ENCODE measurements at regions of chr20 and their contacts with region 1.

Region 1: GRCh38 chr20:5991623-5992441 is 41.4 kb downstream of the MCM8 start:
- DNase-seq: peak; percentile 72
- ATAC-seq: peak; percentile 87
- H3K4me3 ChIP-seq: no peak overlapping the region
- H3K27ac ChIP-seq: peak overlapping the region; percentile 71
- H3K4me1 ChIP-seq: peaks cover 32% of the 10 kb centered on the region
- H3K27me3 ChIP-seq: no peaks in the 10 kb centered on the region
- CTCF ChIP-seq: no peak

Region 2: DNA sequence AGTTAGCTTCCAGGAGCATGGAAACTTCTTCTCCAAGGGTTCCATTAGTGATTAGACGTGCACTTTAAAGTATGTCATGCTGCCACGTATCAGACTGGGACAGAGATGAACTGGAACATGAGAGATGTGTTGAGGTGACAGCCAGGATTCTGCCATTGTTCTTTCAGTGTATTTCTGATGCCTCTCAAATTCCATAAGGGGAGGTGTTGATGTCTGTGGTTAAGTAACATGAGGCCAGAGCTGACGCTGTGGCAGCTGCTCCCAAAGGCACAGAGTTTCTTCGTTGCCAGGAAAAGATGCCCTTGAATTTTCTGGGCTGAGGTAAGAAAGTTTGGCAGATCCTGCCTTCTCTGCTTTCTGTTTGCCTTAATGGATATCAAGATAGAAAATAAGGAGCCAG is 105.0 kb before region 1 on chr20:
- CTCF ChIA-PET with region 1: no interaction called
- POLR2A ChIA-PET with region 1: no interaction called
- intact Hi-C with region 1: no loop called
- DNase-seq: no peak
- ATAC-seq: no peak
- H3K4me3 ChIP-seq: no peak overlapping the region
- H3K27ac ChIP-seq: no peak overlapping the region
- H3K4me1 ChIP-seq: no peaks in the 10 kb centered on the region
- H3K27me3 ChIP-seq: peaks cover 45% of the 10 kb centered on the region; the same call in 1 of the 2 replicates
- CTCF ChIP-seq: no peak

Region 3: DNA sequence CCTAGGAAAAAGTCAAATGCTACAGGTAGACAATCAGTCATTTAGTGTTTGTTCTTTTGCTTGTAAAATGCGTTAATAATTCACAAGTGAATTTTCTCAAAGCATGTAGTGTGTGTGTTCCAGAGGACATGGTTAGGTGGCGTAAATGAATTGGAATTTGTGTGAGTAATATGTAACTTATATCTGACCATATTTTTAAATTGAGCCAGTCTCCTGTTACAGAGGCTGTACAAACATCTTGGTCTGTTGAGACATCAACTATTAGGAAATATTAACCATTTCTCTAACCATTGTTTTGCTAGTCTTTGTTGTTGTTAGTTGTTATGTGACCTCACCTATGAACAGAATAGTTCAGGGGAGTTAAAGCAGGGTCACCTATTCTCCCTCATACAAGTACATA is 18.7 kb before region 1 on chr20:
- CTCF ChIA-PET with region 1: no interaction called
- POLR2A ChIA-PET with region 1: no interaction called
- intact Hi-C with region 1: loop called (anchors 2 kb)
- DNase-seq: peak; percentile 97
- ATAC-seq: peak; percentile 94
- H3K4me3 ChIP-seq: peak overlapping the region; percentile 34; the same call in 1 of the 2 replicates
- H3K27ac ChIP-seq: peak overlapping the region; percentile 86
- H3K4me1 ChIP-seq: peaks cover 52% of the 10 kb centered on the region
- H3K27me3 ChIP-seq: no peaks in the 10 kb centered on the region
- CTCF ChIP-seq: no peak

Region 4: DNA sequence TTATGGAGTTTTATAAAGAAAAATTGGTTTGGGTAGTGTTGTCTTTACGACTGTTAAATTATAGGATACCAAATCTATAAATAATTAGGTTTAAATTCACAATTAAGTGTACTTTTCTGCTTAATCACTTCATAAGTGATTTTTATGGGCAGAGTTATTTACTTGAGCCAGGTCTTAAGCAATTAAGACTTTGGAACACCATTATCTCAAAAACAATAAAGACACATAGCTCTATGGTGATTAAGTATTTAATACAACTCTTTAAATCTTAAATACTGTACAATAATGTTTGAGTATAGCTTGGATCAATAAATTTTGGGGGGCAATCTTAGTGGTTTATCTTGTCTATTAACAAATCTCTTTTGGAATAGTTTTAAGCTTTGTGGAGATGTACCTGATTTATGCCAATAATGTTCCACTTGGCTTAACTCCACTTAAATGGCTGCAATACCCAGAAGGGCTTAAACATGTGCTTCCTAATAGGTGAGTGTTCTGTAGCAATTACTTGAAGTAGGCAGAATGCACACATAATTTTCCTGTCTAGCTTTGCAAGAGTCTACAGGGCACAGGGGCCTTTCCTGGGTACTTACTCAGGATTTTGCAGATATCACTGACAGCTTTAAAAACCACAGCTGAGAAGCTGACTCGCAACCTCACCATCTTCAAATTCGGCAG is 123.5 kb after region 1 on chr20:
- CTCF ChIA-PET with region 1: no interaction called
- POLR2A ChIA-PET with region 1: no interaction called
- intact Hi-C with region 1: no loop called
- DNase-seq: no peak
- ATAC-seq: no peak
- H3K4me3 ChIP-seq: no peak overlapping the region
- H3K27ac ChIP-seq: no peak overlapping the region
- H3K4me1 ChIP-seq: peaks cover 3% of the 10 kb centered on the region; the same call in 1 of the 2 replicates
- H3K27me3 ChIP-seq: no peaks in the 10 kb centered on the region
- CTCF ChIP-seq: no peak

Region 5: DNA sequence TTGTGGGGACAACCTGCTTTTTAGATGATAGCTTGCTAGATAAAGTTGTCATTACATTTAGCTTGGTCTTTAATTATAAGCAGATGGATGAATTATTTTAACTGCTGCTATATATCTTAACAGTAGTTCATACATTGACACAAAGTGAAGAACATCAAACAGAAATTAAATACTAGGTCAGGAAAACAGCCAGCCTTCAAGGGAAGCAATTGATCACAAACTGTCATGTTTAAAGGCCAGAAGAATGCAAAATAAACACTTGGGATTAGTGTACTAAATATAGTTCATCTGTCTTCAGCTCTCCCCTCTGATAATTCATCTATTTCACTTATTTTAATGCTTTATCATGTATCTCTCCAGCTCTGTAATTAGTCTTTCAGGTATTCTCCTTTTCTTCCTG is 356.1 kb after region 1 on chr20:
- CTCF ChIA-PET with region 1: no interaction called
- POLR2A ChIA-PET with region 1: no interaction called
- intact Hi-C with region 1: no loop called
- DNase-seq: no peak
- ATAC-seq: no peak
- H3K4me3 ChIP-seq: no peak overlapping the region
- H3K27ac ChIP-seq: no peak overlapping the region
- H3K4me1 ChIP-seq: no peaks in the 10 kb centered on the region
- H3K27me3 ChIP-seq: peaks cover 47% of the 10 kb centered on the region
- CTCF ChIP-seq: no peak